Transverse colon (tissue), 4 donors: ENCODE measurements at regions of chr2 and their contacts with region 1.

Region 1: DNA sequence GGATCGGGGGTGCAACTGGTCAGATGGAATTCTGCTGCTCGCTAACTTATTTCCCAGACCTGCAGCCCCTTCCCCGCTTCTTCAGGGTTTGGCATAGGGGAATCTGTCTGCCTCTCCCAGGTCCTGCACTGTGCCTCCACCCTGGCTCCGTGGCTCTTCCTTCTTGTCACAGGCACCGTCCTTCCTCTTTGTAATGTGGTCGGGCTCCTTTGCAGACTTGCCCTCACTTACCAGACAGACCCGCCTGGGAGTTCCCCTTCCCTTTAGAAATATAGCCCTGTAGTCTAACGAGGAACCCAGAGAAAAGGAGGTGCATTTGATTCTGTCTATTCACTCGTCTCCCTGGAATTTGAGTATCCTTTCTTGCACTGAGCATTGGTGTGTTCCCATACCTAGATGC is 63.9 kb upstream of the PAX8 start:
- DNase-seq: no peak
- H3K4me3 ChIP-seq: no peak overlapping the region
- H3K27ac ChIP-seq: no peak overlapping the region
- H3K4me1 ChIP-seq: no peaks in the 10 kb centered on the region
- H3K27me3 ChIP-seq: no peaks in the 10 kb centered on the region
- CTCF ChIP-seq: no peak
- EP300 ChIP-seq: no peak
- POLR2A ChIP-seq: no peak

Region 2: DNA sequence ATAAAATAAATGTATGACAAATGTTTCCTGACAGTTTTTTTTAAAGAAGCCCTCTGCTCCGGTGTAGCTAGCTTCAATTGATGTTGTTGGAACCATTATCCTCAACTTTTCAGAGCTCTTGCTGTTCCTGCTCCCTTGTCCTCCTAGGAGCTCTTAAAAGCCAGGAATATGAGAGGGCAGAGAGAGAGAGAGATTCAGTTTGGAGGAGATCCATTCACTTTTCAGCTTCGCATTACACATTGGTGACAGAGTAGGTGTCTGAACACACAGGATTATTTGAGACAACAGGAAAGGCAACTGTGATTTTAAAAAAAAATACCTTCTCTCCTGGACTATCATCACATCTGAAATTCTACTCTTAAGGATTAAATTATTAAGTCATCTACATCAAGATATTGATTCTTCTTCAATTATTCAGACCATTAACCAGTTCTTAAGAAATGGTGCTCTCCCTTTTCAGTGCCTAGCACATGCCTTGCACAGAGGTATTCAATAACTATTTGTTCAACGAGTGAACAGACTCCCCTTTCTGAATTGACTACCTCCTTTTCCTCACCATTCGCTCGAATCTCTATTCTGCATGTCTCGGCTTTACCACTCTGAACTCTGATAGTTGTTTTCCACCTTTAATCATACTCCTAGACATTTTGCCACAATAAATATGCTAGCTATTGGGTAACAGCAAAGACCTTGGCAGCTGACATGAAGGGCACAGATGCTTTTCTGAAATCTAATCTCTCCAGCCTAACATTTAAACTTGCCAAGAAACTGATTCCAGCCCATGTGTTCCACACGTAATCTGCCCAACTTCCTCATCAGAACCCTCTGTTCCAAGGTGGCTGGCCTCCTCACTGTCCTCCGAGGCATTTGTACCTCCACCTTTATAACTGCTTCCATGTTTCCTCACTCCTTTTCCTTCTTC is 442.4 kb after region 1 on chr2:
- in situ Hi-C with region 1: no loop called
- intact Hi-C with region 1: loop called (anchors 5 kb)
- DNase-seq: no peak
- H3K4me3 ChIP-seq: no peak overlapping the region
- H3K27ac ChIP-seq: no peak overlapping the region
- H3K4me1 ChIP-seq: no peaks in the 10 kb centered on the region
- H3K27me3 ChIP-seq: no peaks in the 10 kb centered on the region
- CTCF ChIP-seq: no peak
- EP300 ChIP-seq: no peak
- POLR2A ChIP-seq: no peak

Region 3: GRCh38 chr2:114968748-114969400 is 1626.2 kb after region 1 on chr2:
- in situ Hi-C with region 1: no loop called
- intact Hi-C with region 1: loop called (anchors 5 kb)
- DNase-seq: no peak
- H3K4me3 ChIP-seq: no peak overlapping the region
- H3K27ac ChIP-seq: no peak overlapping the region
- H3K4me1 ChIP-seq: no peaks in the 10 kb centered on the region
- H3K27me3 ChIP-seq: no peaks in the 10 kb centered on the region
- CTCF ChIP-seq: no peak
- EP300 ChIP-seq: no peak
- POLR2A ChIP-seq: no peak